Endothelial cell of umbilical vein (primary cell): ENCODE measurements at regions of chr21 and their contacts with region 1.

Region 1: GRCh38 chr21:17527240-17527639 is 14.4 kb downstream of the CXADR start:
- DNase-seq: peak; percentile 86
- H3K4me3 ChIP-seq: peak overlapping the region in 1 of 3 experiments; percentile 33
- H3K27ac ChIP-seq: peak overlapping the region; percentile 88
- H3K4me1 ChIP-seq: peaks cover 31% of the 10 kb centered on the region
- H3K27me3 ChIP-seq: no peaks in the 10 kb centered on the region
- CTCF ChIP-seq: no peak
- POLR2A ChIP-seq: no peak

Region 2: DNA sequence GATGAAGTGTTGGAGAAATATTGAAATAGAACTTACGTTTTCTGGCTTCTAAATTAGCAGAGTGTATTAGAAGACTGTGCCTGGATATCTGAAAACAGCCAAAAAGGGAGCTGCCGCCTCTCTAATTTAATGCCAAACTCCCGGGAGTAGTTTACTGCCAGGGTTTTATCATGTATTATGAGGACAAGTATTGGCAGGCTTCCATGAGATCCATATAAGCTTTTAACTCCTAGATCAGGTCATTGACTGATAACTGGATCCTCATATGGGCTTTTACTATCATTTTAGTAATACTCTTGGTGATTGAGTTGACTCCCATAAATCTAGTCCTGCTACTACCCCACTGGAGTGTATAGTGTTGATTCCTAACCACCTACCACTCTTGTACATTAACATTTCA is 192.8 kb before region 1 on chr21:
- CTCF ChIA-PET with region 1: no interaction called
- POLR2A ChIA-PET with region 1: no interaction called
- dilution Hi-C with region 1: no loop called
- intact Hi-C with region 1: no loop called
- DNase-seq: no peak
- H3K4me3 ChIP-seq: no peak overlapping the region
- H3K27ac ChIP-seq: no peak overlapping the region
- H3K4me1 ChIP-seq: no peaks in the 10 kb centered on the region
- H3K27me3 ChIP-seq: no peaks in the 10 kb centered on the region
- CTCF ChIP-seq: no peak
- POLR2A ChIP-seq: no peak

Region 3: DNA sequence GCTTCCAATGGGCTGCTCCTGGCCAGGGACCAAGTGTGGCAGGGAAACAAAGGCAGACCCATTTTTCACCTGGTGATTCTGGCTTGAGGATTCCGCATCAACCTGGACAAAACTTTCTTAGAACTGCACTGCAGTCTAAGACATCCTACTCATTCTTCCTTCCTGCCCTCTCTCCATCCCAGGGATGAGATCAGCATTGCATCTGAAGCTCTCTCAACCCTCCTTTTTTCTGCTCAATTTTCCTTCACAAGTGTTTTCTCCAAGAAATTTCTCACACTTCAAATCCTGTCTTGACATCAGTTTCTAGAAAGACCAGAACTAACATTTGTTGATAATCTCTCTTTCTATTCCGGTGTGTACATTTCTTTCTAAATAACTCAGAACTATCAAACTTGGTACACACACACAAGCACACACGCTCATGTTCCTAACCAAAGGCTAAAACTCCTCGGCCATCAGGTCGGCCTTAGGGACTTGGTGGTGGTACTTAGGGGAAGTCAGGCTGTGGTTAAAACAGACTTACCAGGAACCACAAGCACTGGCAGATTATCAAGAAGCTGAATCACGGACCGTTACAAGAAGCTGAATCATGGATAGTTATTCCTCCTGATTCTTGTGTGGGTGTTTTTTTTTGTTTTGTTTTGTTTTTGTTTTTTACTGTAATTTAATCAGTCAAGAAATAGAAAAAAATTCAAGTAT is 35.4 kb before region 1 on chr21:
- CTCF ChIA-PET with region 1: interaction called, 4 read pairs
- POLR2A ChIA-PET with region 1: no interaction called
- dilution Hi-C with region 1: no loop called
- intact Hi-C with region 1: loop called (anchors 1 kb)
- DNase-seq: peak; percentile 89
- H3K4me3 ChIP-seq: no peak overlapping the region
- H3K27ac ChIP-seq: peak overlapping the region; percentile 72
- H3K4me1 ChIP-seq: peaks cover 45% of the 10 kb centered on the region
- H3K27me3 ChIP-seq: no peaks in the 10 kb centered on the region
- CTCF ChIP-seq: no peak
- POLR2A ChIP-seq: no peak

Region 4: GRCh38 chr21:17537299-17537698 is 10.1 kb after region 1 on chr21:
- CTCF ChIA-PET with region 1: interaction called, 30 read pairs
- POLR2A ChIA-PET with region 1: interaction called, 3 read pairs
- dilution Hi-C with region 1: no loop called
- intact Hi-C with region 1: loop called (anchors 1 kb)
- DNase-seq: peak; percentile 43
- H3K4me3 ChIP-seq: no peak overlapping the region
- H3K27ac ChIP-seq: no peak overlapping the region
- H3K4me1 ChIP-seq: peaks cover 20% of the 10 kb centered on the region
- H3K27me3 ChIP-seq: peaks cover 0 to 2% of the 10 kb centered on the region in 2 experiments
- CTCF ChIP-seq: no peak
- POLR2A ChIP-seq: no peak

Region 5: GRCh38 chr21:17554679-17555465 is 27.6 kb after region 1 on chr21:
- CTCF ChIA-PET with region 1: interaction called, 21 read pairs
- POLR2A ChIA-PET with region 1: no interaction called
- dilution Hi-C with region 1: no loop called
- intact Hi-C with region 1: no loop called
- DNase-seq: peak; percentile 25
- H3K4me3 ChIP-seq: no peak overlapping the region
- H3K27ac ChIP-seq: no peak overlapping the region
- H3K4me1 ChIP-seq: no peaks in the 10 kb centered on the region
- H3K27me3 ChIP-seq: no peaks in the 10 kb centered on the region
- CTCF ChIP-seq: peak; percentile 23 to 30
- POLR2A ChIP-seq: no peak